ENCODE measurements at regions of chr2 and their contacts with region 1.

Region 1: GRCh38 chr2:207166039-207166348 is 246 bp upstream of the KLF7 start:
- DNase-seq: peak; percentile 97
- ATAC-seq: peak; percentile 94
- H3K4me3 Mint-ChIP-seq: peak overlapping the region; percentile 85
- H3K27ac Mint-ChIP-seq: peak overlapping the region; percentile 92
- H3K4me1 Mint-ChIP-seq: peaks cover 39% of the 10 kb centered on the region
- H3K27me3 Mint-ChIP-seq: peaks cover 4% of the 10 kb centered on the region
- CTCF ChIP-seq: no peak

Region 2: DNA sequence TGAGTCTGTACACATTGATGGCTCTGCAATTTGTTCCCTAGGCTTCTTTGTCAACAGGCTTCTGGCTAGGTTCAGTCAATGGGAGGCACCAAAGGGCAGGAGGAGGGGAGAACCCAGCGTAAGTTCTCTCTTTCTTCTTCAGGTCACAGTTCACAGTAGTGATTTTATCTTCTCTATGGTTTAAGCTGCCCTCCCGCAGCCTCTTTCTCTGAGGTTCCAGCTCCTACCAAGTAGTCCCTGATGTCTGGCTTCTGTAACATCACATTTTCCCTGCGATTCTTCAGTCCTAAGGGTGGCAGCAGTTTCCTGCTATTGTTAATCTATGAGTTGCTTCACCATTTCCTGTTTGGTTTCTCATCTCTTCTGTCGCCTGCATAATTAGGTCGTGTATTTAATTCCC is 119.3 kb before region 1 on chr2:
- CTCF ChIA-PET with region 1: interaction called, 12 read pairs
- POLR2A ChIA-PET with region 1: no interaction called
- intact Hi-C with region 1: no loop called
- DNase-seq: peak; percentile 33
- ATAC-seq: peak; percentile 90
- H3K4me3 Mint-ChIP-seq: no peak overlapping the region
- H3K27ac Mint-ChIP-seq: no peak overlapping the region
- H3K4me1 Mint-ChIP-seq: peaks cover 7% of the 10 kb centered on the region
- H3K27me3 Mint-ChIP-seq: peaks cover 1% of the 10 kb centered on the region
- CTCF ChIP-seq: no peak

Region 3: DNA sequence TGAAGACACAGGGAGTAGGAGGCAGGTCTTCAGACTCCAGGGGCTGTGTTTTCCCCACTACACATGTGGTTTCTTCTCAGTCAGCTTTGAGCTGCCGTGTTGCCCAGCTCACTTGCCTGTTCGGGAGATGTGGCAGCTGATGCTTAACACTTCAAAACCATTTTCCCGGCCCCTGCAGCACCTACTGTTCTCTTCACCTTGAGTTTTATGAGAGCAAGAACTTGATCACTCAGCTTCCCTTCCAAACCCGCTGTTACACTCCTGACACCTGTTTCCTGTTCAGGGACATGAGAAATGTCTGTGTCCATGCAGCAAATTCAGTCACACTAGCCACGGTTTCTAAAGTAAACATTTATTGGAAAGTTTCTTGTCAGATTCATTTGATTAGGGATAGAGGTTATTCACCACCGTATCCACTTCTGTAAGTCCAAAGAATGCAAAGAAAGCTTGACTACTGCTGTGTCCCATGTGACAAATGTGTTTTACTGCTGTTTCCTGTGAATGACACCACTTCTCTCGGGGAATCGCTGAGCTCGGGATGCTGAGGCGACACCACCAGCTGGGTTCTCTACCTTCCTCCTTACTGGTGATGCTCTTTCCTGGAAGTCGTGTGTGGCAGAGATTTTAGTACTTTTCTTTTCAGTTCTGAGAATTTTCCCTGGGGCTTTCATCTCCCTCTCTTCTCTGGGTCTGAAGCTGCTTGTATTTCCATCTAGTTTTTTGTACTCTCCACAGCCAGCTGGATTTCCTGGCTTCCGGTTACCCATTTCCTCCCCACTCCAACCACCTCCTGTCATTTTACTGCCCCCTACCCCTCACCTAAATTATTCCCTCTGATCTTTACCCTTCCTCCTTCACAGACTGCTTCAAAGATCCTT is 92.0 kb before region 1 on chr2:
- CTCF ChIA-PET with region 1: interaction called, 7 read pairs
- POLR2A ChIA-PET with region 1: interaction called, 14 read pairs
- intact Hi-C with region 1: loop called (anchors 5 kb)
- DNase-seq: peak; percentile 66
- ATAC-seq: peak; percentile 81
- H3K4me3 Mint-ChIP-seq: peak overlapping the region; percentile 61
- H3K27ac Mint-ChIP-seq: peak overlapping the region; percentile 87
- H3K4me1 Mint-ChIP-seq: peaks cover 34% of the 10 kb centered on the region
- H3K27me3 Mint-ChIP-seq: peaks cover 5% of the 10 kb centered on the region
- CTCF ChIP-seq: no peak

Region 4: DNA sequence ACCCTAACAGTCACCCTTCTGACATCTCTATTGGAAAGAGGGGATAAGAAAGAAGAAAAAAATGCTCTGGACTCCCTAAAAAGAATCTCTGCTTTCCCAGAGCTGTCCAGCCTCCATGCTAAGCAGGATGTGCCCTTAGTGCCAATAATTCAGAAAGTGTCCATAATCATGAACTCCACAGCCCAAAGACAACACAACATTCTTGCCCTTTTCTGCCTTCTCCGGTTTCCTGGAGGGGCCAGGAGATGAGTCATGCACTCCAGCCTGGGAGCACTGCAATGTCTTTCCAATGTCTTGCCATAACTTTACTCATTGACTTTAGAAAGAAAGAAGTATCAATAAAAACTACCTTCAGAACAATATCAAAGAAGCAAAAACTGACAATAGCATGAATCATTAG is 44.2 kb before region 1 on chr2:
- CTCF ChIA-PET with region 1: interaction called, 6 read pairs
- POLR2A ChIA-PET with region 1: interaction called, 4 read pairs
- intact Hi-C with region 1: loop called (anchors 2 kb)
- DNase-seq: no peak
- ATAC-seq: no peak
- H3K4me3 Mint-ChIP-seq: no peak overlapping the region
- H3K27ac Mint-ChIP-seq: no peak overlapping the region
- H3K4me1 Mint-ChIP-seq: peaks cover 58% of the 10 kb centered on the region
- H3K27me3 Mint-ChIP-seq: no peaks in the 10 kb centered on the region
- CTCF ChIP-seq: no peak

Region 5: DNA sequence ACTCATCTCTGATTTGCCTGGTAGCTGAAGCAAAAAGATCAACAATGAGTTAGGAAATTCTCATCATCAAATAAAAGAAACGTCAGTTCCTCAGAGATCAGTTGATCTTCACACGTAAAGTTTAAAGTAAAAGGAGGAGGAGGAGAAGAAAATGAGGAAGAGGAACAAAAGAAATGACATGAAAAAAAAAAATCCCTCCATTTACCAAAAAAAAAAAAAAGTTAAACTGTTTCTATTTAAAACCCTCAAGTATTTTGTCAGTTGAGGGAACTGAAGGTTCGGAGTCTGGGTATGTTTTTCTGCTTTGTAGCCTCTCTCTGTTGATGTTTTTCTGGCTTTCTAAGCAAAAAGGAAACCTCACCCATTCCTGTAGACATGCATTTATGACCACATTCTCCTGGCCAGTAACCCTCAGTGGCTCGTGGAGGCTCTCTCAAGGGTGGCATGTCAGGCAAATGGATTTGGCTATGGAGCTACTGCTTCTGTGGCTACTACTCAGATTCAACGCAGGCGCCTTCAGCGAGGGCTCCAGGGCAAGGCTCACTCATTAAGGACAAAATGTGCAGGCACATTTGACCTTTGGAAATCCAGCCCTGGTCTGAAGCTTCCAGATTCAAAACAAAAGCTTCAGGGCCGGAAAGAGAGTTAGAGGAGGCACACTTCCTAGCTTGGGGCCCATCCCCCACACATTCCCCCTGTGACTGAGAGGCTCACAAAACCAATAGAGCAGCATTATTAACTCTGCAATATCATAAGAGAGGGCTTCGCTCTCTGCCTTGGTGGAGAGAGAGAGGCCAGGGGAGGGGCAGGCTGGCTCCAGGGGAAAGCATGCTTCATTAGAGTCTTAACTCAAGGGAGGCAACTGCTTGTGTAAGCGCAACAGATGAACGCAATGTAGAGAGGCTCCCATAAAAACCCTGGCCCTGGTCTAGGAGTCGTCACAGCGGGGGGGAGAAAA is 22.5 kb before region 1 on chr2:
- CTCF ChIA-PET with region 1: interaction called, 11 read pairs
- POLR2A ChIA-PET with region 1: interaction called, 6 read pairs
- intact Hi-C with region 1: loop called (anchors 2 kb)
- DNase-seq: peak; percentile 66
- ATAC-seq: peak; percentile 62
- H3K4me3 Mint-ChIP-seq: peak overlapping the region; percentile 72
- H3K27ac Mint-ChIP-seq: peak overlapping the region; percentile 83
- H3K4me1 Mint-ChIP-seq: peaks cover 50% of the 10 kb centered on the region
- H3K27me3 Mint-ChIP-seq: no peaks in the 10 kb centered on the region
- CTCF ChIP-seq: no peak

Region 6: GRCh38 chr2:207149249-207150213 is 16.5 kb before region 1 on chr2:
- CTCF ChIA-PET with region 1: no interaction called
- POLR2A ChIA-PET with region 1: interaction called, 25 read pairs
- intact Hi-C with region 1: loop called (anchors 2 kb)
- DNase-seq: peak; percentile 49
- ATAC-seq: peak; percentile 81
- H3K4me3 Mint-ChIP-seq: no peak overlapping the region
- H3K27ac Mint-ChIP-seq: no peak overlapping the region
- H3K4me1 Mint-ChIP-seq: peaks cover 56% of the 10 kb centered on the region
- H3K27me3 Mint-ChIP-seq: no peaks in the 10 kb centered on the region
- CTCF ChIP-seq: no peak

Region 7: GRCh38 chr2:207334624-207335371 is 168.8 kb after region 1 on chr2:
- CTCF ChIA-PET with region 1: no interaction called
- POLR2A ChIA-PET with region 1: interaction called, 3 read pairs
- intact Hi-C with region 1: loop called (anchors 5 kb)
- DNase-seq: peak; percentile 45
- ATAC-seq: peak; percentile 11
- H3K4me3 Mint-ChIP-seq: peak overlapping the region; percentile 16
- H3K27ac Mint-ChIP-seq: peak overlapping the region; percentile 79
- H3K4me1 Mint-ChIP-seq: peaks cover 66% of the 10 kb centered on the region
- H3K27me3 Mint-ChIP-seq: no peaks in the 10 kb centered on the region
- CTCF ChIP-seq: no peak

Measured in activated CD8-positive, alpha-beta T cell treated with anti-CD3 and anti-CD28 coated beads for 36 hours (primary cell).